Cardiac septum (tissue), 1 donor: ENCODE measurements at regions of chrX and their contacts with region 1.

Region 1: DNA sequence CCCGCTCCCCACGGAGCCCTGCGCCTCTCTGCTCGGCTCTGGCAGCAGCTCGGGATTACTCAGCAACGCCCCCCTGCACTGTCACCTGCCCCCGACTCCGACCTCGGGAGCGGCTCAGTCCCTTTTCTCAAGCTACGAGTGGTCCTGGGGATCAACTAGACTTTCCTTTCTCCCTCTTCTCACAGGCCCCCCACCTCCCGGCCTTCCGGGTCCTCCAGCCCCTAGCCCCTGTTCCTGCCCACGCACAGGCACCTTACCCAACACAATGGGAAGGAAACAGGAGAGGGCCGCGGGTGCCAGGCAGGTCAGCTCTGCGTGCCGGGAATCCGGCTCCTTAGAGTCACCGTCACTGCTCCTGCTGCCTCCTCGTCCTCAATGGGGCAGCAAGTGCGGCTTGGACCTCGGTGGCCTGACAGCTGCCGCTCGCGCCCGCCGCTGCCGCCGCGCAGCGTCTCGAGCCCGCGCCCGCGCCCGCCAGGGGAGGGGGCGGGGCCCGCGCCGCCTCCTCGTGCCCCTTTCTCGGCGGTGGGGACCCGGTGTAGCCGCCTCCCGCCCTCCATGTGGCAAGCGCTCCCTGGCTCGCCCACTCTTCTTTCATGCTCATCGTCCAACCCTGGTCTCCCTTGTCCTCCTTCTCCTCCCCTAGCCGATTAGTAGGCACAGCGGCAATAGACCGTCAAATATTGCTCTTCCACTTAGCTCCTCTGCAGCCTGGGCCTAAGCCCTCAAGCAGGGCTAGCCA is at the start of gene RAB9B:
- DNase-seq: peak; percentile 83
- total RNA-seq, gene RAB9B: 38.0 TPM

Region 2: GRCh38 chrX:103918581-103919269 is 86.8 kb after region 1 on chrX:
- intact Hi-C with region 1: no loop called
- DNase-seq: no peak

Region 3: DNA sequence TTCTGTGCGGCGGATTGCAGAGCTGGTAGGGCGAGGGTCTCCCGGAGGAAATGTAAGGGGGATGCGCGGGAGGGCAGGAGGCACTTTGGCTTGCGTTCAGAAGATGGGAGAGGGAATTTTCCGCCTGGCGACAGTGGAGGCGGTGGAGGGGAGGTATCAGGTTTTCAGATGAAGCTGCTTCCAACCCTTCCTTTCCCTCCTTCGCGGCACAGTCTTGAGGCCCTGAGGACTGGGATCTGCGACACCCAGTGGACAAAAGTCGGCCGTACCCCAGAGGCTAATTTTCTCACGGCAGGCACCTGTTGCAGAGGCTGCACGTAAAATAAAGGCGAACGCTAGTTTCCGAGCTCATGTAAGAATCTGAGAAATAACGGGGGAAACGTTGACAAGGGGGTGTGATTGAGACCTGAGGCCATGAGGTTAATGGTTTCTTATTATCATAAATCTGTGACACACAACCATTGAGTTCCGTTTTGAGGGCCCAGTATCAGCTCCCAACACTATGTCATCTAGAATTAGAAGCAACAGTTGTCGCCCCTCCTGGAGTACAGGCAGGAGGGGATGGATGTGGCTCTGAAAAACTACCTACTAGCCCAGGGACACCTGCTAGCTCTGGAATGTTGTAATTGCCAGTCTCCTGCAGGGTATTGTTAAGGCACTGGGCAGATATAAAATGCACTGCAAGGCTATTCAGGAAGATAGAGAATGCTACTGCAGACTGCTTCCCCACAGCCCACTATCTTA is 281.4 kb after region 1 on chrX:
- intact Hi-C with region 1: loop called (anchors 5 kb)
- DNase-seq: peak; percentile 78